ENCODE measurements at regions of chr17 and their contacts with region 1.

Region 1: DNA sequence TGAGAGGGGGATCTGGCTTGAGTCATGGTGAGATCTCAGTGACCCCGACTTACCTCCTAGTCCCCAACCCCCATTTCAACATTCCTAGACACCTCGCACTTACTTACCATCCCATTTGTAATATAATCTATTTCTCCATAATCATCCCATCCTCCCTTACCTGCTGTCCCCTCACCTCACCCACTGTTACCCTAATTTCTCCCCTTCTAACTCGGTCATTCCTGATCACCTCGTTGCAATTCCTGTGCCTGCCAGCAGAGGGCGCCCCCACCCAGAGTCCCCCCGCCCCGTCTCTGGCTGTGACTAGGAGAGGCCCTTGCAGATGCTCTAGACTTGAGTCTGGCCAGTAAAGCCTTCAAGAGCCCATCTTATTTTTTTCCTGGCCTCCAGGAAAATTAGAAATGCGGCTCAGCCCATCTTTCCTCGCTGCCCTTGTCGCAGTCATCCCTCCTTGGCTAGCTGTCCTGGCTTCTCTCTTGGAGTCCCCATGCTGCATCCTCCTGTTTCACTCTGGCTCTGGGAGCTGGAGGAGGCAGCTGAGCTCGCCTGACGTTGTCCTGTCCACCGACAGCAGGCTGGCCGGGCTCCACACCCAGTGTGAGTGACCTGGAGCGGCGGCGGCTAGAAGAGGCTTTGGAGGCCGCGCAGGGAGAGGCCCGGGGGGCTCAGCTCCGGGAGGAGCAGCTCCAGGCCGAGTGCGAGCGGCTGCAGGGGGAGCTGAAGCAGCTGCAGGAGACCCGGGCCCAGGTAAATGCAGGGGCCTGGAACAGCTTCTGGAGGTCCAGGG is 5.0 kb downstream of the TBKBP1 start:
- DNase-seq: peak; percentile 61 to 97
- ATAC-seq: peak; percentile 41 to 71; a peak in 5 of 6 replicates
- H3K4me3 ChIP-seq: no peak overlapping the region
- H3K27ac ChIP-seq: no peak overlapping the region
- H3K4me1 ChIP-seq: peaks cover 4% of the 10 kb centered on the region; the same call in 1 of the 3 replicates
- CTCF ChIP-seq: peak; percentile 96
- EP300 ChIP-seq: no peak
- POLR2A ChIP-seq: no peak
- RAD21 ChIP-seq: peak; percentile 71 to 80

Region 2: DNA sequence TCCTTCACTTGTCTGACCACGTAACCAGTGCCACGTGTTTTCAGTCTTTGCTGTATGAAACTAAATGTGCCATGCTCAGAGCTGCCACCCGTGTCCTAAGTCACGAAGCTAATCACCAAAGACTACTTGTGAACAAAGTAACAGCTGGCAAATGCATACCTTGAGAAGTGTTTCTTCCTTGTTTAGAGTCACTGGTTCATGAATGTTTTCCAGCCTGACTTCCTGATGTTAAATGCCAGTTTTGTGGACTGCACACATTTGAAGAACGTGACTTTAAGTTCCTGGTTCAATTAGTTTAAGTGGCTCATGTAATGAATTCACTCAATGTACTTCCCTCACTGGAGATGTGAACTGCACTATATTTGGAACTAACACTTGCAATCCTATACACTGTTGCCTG is 69.1 kb before region 1 on chr17:
- CTCF ChIA-PET with region 1: no interaction called
- POLR2A ChIA-PET with region 1: no interaction called
- DNase-seq: no peak
- ATAC-seq: no peak
- H3K4me3 ChIP-seq: no peak overlapping the region
- H3K27ac ChIP-seq: no peak overlapping the region
- H3K4me1 ChIP-seq: no peaks in the 10 kb centered on the region
- CTCF ChIP-seq: no peak
- EP300 ChIP-seq: no peak
- POLR2A ChIP-seq: no peak
- RAD21 ChIP-seq: no peak

Region 3: DNA sequence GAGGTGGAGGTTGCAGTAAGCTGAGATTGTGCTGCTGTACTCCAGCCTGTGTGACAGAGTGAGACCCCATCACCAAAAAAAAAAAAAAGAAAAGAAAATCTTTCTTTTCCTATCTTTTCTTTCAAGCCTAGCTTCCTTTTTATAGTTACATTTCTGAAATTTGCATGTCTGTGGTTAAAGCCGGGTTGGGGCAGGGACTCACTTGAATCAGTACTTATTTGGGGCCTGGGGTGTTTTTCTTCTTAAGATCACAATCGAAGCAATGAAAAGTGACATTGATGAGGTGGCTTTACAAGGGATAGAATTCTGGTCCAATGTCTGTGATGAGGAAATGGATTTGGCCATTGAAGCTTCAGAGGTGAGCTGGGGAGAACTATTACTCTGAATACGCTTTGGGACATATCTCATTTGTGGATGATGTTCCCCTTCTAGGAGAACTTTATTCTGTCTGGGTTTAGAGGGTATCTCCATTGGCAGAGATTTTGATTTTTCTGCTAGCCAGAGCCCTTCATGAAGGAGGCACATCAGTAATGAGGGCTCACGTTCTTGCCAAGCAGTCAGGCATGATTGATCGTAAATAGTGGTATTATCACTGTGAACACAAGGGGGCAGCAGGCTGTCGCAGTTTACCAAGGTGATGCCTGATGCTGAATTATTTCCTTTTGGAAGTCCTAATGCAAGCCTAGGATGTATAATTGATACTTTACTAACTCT is 34.9 kb before region 1 on chr17:
- CTCF ChIA-PET with region 1: interaction called, 57 read pairs
- POLR2A ChIA-PET with region 1: no interaction called
- DNase-seq: peak; percentile 75 to 76
- ATAC-seq: peak; percentile 88 to 95
- H3K4me3 ChIP-seq: no peak overlapping the region
- H3K27ac ChIP-seq: no peak overlapping the region
- H3K4me1 ChIP-seq: peaks cover 9% of the 10 kb centered on the region; the same call in 2 of the 3 replicates
- CTCF ChIP-seq: peak; percentile 88
- EP300 ChIP-seq: no peak
- POLR2A ChIP-seq: no peak
- RAD21 ChIP-seq: peak; percentile 59 to 66; a peak in 3 of 5 replicates

Region 4: DNA sequence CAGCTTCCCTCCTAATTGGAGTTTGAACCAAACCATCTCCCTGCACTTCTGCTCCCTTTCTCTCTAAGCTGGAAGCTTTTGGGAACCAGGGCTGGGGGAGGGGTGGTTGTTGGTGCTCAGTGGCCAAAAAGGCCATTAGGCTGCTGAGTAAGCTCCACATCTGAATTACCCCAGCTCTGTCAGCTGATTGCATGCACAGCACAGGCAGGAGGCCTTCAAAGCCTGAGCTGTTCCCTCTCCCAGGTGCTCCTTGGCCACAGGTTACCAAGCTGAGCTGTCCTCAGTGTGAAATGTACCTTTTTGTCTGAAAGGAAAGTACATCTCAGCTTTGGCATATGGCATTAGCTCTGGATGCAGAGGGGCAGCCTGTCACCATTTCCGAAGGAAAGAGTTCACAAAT is 11.2 kb before region 1 on chr17:
- CTCF ChIA-PET with region 1: interaction called, 43 read pairs
- POLR2A ChIA-PET with region 1: no interaction called
- DNase-seq: no peak
- ATAC-seq: peak; percentile 47 to 57
- H3K4me3 ChIP-seq: no peak overlapping the region
- H3K27ac ChIP-seq: no peak overlapping the region
- H3K4me1 ChIP-seq: peaks cover 31% of the 10 kb centered on the region
- CTCF ChIP-seq: no peak
- EP300 ChIP-seq: no peak
- POLR2A ChIP-seq: no peak
- RAD21 ChIP-seq: no peak

Region 5: DNA sequence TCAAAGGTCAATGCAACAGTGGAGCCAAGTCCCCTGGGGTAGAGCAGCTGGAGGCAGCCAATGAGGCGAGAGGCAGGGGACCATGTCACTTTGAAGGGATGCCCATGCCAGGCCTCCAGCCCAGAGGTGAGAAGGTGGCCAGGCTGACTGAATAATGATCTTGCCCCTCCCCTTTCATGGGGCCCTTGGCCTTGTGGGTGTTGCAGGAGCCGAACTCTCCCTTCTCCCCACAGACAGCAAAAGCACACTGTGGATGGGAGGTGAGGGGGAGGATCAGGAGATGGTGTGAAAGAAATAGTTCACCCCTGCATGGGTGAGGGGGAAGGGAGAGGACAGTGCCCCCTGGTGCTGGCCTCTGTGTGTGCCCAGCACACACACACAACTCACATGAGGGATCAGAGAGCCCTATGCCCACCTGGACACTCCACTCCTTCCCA is 18.3 kb after region 1 on chr17:
- CTCF ChIA-PET with region 1: interaction called, 130 read pairs
- POLR2A ChIA-PET with region 1: no interaction called
- DNase-seq: no peak
- ATAC-seq: peak; percentile 7 to 49; a peak in 3 of 6 replicates
- H3K4me3 ChIP-seq: no peak overlapping the region
- H3K27ac ChIP-seq: no peak overlapping the region
- H3K4me1 ChIP-seq: peaks cover 13% of the 10 kb centered on the region
- CTCF ChIP-seq: peak; percentile 27; the same call in 1 of the 3 replicates
- EP300 ChIP-seq: no peak
- POLR2A ChIP-seq: no peak
- RAD21 ChIP-seq: no peak

Region 6: DNA sequence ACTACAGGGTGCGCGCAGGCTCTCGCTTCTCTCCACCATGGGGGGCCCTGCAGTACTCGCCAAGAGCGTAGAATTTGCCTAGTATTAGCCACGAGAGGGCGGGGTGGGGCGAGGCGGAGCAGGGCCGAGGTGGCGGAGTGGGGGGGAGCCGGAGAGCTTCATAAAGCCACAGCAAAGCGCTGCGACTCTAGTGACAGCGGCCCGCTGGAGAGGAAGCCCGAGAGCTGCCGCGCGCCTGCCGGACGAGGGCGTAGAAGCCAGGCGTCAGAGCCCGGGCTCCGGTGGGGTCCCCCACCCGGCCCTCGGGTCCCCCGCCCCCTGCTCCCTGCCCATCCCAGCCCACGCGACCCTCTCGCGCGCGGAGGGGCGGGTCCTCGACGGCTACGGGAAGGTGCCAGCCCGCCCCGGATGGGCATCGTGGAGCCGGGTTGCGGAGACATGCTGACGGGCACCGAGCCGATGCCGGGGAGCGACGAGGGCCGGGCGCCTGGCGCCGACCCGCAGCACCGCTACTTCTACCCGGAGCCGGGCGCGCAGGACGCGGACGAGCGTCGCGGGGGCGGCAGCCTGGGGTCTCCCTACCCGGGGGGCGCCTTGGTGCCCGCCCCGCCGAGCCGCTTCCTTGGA is 34.2 kb after region 1 on chr17 and contains the start of gene TBX21:
- CTCF ChIA-PET with region 1: interaction called, 87 read pairs
- POLR2A ChIA-PET with region 1: no interaction called
- DNase-seq: peak; percentile 80 to 90
- ATAC-seq: peak; percentile 74 to 91
- H3K4me3 ChIP-seq: peak within 1 kb of the TSS; percentile 48
- H3K27ac ChIP-seq: peak within 1 kb of the TSS in 1 of 2 experiments; percentile 74; a peak in 3 of 6 replicates
- H3K4me1 ChIP-seq: 0 out of 3 replicates have a peak, but pooled peaks cover 4% of the 10 kb centered on the region
- CTCF ChIP-seq: peak; percentile 45; the same call in 2 of the 3 replicates
- EP300 ChIP-seq: no peak
- POLR2A ChIP-seq: 0 out of 2 replicates have a peak, but pooled peaks have one; percentile 39
- RAD21 ChIP-seq: peak; percentile 40; a peak in 3 of 5 replicates
- polyA plus RNA-seq, gene TBX21: 0.03 TPM in 1 of 2 replicates, not detected in the other

Region 7: GRCh38 chr17:47789611-47790561 is 90.9 kb after region 1 on chr17:
- CTCF ChIA-PET with region 1: interaction called, 24 read pairs
- POLR2A ChIA-PET with region 1: no interaction called
- DNase-seq: peak; percentile 79 to 92
- ATAC-seq: peak; percentile 99
- H3K4me3 ChIP-seq: peak overlapping the region; percentile 48
- H3K27ac ChIP-seq: peak overlapping the region; percentile 35 to 78; a peak in 4 of 6 replicates
- H3K4me1 ChIP-seq: peaks cover 3% of the 10 kb centered on the region; the same call in 1 of the 3 replicates
- CTCF ChIP-seq: peak; percentile 70
- EP300 ChIP-seq: no peak
- POLR2A ChIP-seq: no peak
- RAD21 ChIP-seq: peak; percentile 71 to 84

Region 8: DNA sequence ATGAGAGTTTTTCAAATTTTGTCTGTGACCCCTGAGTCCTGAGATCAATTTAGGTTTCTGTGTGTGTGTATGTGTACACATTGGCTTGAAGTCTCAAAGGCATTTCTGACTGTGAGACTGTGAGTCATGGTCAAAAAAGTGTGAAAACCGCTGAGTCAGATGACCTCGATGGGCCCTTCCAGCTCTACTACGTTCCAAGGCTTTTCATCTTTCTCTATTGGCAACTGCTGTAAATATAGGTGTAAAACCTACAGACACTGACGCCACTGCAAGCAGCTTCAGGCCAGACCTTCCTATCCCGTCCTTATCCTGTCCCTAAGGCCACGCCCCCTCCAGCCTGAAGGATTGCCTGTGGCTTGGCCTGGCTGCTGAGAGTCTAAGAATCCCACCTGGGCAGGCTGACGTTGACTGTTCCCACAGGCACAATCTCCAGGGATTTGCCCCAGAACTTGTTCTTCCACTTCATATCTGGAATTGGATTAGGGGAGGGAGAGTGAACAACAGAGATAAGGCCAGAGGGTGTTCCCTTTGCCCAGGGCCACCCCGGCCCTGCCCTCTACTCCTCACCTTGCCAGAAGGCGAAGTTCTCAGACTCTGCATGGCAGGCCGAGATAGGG is 111.4 kb after region 1 on chr17:
- CTCF ChIA-PET with region 1: interaction called, 16 read pairs
- POLR2A ChIA-PET with region 1: no interaction called
- DNase-seq: peak; percentile 75 to 88
- ATAC-seq: peak; percentile 69 to 85
- H3K4me3 ChIP-seq: no peak overlapping the region
- H3K27ac ChIP-seq: peak overlapping the region; percentile 36 to 75; a peak in 4 of 6 replicates
- H3K4me1 ChIP-seq: peaks cover 25% of the 10 kb centered on the region
- CTCF ChIP-seq: no peak
- EP300 ChIP-seq: 0 out of 5 replicates have a peak, but pooled peaks of 1 of the 2 experiments have one; percentile 16
- POLR2A ChIP-seq: no peak
- RAD21 ChIP-seq: no peak